HCT116 (cell line): ENCODE measurements at regions of chr7 and their contacts with region 1.

Region 1: GRCh38 chr7:67267914-67268313 is 271.3 kb downstream of the TYW1 start:
- DNase-seq: no peak
- ATAC-seq: no peak
- H3K4me3 ChIP-seq: no peak overlapping the region
- H3K27ac ChIP-seq: no peak overlapping the region
- H3K4me1 ChIP-seq: peaks cover 0 to 3% of the 10 kb centered on the region in 2 experiments; a peak in 1 of 4 replicates
- H3K27me3 ChIP-seq: no peaks in the 10 kb centered on the region
- CTCF ChIP-seq: no peak
- POLR2A ChIP-seq: no peak
- RAD21 ChIP-seq: no peak

Region 2: GRCh38 chr7:67251986-67252558 is 15.8 kb before region 1 on chr7:
- CTCF ChIA-PET with region 1: no interaction called
- POLR2A ChIA-PET with region 1: no interaction called
- RAD21 ChIA-PET with region 1: no interaction called
- intact Hi-C with region 1: loop called (anchors 1 kb)
- DNase-seq: no peak
- ATAC-seq: no peak
- H3K4me3 ChIP-seq: no peak overlapping the region
- H3K27ac ChIP-seq: no peak overlapping the region
- H3K4me1 ChIP-seq: peaks cover 2 to 18% of the 10 kb centered on the region in 2 experiments; a peak in 2 of 4 replicates
- H3K27me3 ChIP-seq: no peaks in the 10 kb centered on the region
- CTCF ChIP-seq: no peak
- POLR2A ChIP-seq: no peak
- RAD21 ChIP-seq: no peak